Activated CD4-positive, alpha-beta T cell treated with anti-CD3 and anti-CD28 coated beads for 36 hours (primary cell): ENCODE measurements at regions of chr2 and their contacts with region 1.

Region 1: DNA sequence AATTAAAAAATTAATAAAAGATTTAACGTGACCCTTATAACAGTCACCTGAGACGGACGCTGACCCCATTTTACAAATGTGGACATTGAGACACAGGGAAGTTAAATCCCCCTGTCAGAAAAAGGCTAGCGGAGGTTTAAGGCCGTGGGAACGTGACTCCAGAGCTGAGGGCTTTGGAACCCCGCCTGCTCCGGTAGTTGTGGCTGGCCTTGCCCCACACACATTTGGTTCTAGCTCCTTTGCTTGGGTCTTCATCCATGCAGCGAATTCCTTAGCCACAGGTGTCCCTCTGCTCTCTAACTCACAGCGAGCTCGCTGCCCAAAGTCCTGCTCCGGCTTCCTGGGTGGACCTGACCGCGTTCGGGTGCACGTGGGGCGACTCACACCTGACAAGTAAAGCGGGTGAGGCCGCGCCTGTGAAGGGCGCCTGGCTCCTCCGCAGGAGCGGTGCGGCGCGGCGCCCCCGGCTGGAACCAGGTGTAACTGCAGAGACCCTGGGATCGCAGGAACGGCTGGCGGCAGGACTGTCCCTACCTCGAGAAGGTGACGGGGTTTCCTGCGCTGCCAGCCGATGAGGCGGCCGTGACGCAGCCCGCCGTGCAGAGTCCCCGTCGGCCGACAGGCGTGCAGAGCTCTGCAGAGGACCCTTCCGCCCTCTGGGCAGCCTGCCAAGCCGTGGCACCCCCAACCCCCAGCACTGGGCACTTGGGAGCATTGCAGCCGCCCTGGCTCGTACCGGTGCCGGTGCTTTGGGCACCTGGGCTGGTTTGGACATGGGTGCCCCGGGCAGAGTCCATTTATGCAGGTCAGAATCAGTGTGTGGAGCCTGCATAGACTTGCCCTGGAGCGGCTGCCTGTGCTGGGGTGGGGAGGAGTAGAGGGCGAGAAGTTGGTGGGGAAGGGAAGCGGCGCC is 2.4 kb upstream of the PROC start:
- DNase-seq: peak; percentile 93
- ATAC-seq: peak; percentile 95
- H3K4me3 Mint-ChIP-seq: peak overlapping the region; percentile 62
- H3K27ac Mint-ChIP-seq: peak overlapping the region; percentile 56
- H3K4me1 Mint-ChIP-seq: peaks cover 31% of the 10 kb centered on the region
- H3K27me3 Mint-ChIP-seq: peaks cover 19% of the 10 kb centered on the region

Region 2: GRCh38 chr2:126664234-126664633 is 751.6 kb before region 1 on chr2:
- CTCF ChIA-PET with region 1: no interaction called
- POLR2A ChIA-PET with region 1: no interaction called
- intact Hi-C with region 1: loop called in 1 of 2 experiments (anchors 10 kb)
- DNase-seq: peak; percentile 45
- ATAC-seq: peak; percentile 49
- H3K4me3 Mint-ChIP-seq: peak overlapping the region; percentile 49
- H3K27ac Mint-ChIP-seq: peak overlapping the region; percentile 91
- H3K4me1 Mint-ChIP-seq: peaks cover 92% of the 10 kb centered on the region
- H3K27me3 Mint-ChIP-seq: no peaks in the 10 kb centered on the region

Region 3: GRCh38 chr2:127049927-127050802 is 365.7 kb before region 1 on chr2:
- CTCF ChIA-PET with region 1: no interaction called
- POLR2A ChIA-PET with region 1: no interaction called
- intact Hi-C with region 1: no loop called
- DNase-seq: peak; percentile 80
- ATAC-seq: peak; percentile 81
- H3K4me3 Mint-ChIP-seq: no peak overlapping the region
- H3K27ac Mint-ChIP-seq: peak overlapping the region; percentile 31
- H3K4me1 Mint-ChIP-seq: peaks cover 2% of the 10 kb centered on the region
- H3K27me3 Mint-ChIP-seq: no peaks in the 10 kb centered on the region

Region 4: GRCh38 chr2:127197475-127198385 is 218.1 kb before region 1 on chr2:
- CTCF ChIA-PET with region 1: interaction called, 5 read pairs
- POLR2A ChIA-PET with region 1: no interaction called
- intact Hi-C with region 1: loop called in 1 of 2 experiments (anchors 5 kb)
- DNase-seq: peak; percentile 79
- ATAC-seq: peak; percentile 95
- H3K4me3 Mint-ChIP-seq: peak overlapping the region; percentile 58
- H3K27ac Mint-ChIP-seq: no peak overlapping the region
- H3K4me1 Mint-ChIP-seq: no peaks in the 10 kb centered on the region
- H3K27me3 Mint-ChIP-seq: no peaks in the 10 kb centered on the region

Region 5: GRCh38 chr2:127293748-127294562 is 121.9 kb before region 1 on chr2 and contains the start of gene ERCC3:
- CTCF ChIA-PET with region 1: interaction called, 3 read pairs
- POLR2A ChIA-PET with region 1: interaction called, 3 read pairs
- intact Hi-C with region 1: loop called in 1 of 2 experiments (anchors 1 kb)
- DNase-seq: peak; percentile 90
- ATAC-seq: peak; percentile 98
- H3K4me3 Mint-ChIP-seq: peak within 1 kb of the TSS; percentile 98
- H3K27ac Mint-ChIP-seq: peak within 1 kb of the TSS; percentile 100
- H3K4me1 Mint-ChIP-seq: peaks cover 20% of the 10 kb centered on the region
- H3K27me3 Mint-ChIP-seq: no peaks in the 10 kb centered on the region
- total RNA-seq, gene ERCC3: 49.5 to 49.8 TPM

Region 6: GRCh38 chr2:127355386-127356008 is 60.4 kb before region 1 on chr2:
- CTCF ChIA-PET with region 1: interaction called, 5 read pairs
- POLR2A ChIA-PET with region 1: no interaction called
- intact Hi-C with region 1: loop called (anchors 1 to 2 kb)
- DNase-seq: peak; percentile 45
- ATAC-seq: peak; percentile 65
- H3K4me3 Mint-ChIP-seq: no peak overlapping the region
- H3K27ac Mint-ChIP-seq: no peak overlapping the region
- H3K4me1 Mint-ChIP-seq: peaks cover 53% of the 10 kb centered on the region
- H3K27me3 Mint-ChIP-seq: no peaks in the 10 kb centered on the region

Region 7: GRCh38 chr2:127790694-127791529 is 375.1 kb after region 1 on chr2:
- CTCF ChIA-PET with region 1: no interaction called
- POLR2A ChIA-PET with region 1: no interaction called
- intact Hi-C with region 1: no loop called
- DNase-seq: peak; percentile 46
- ATAC-seq: peak; percentile 42
- H3K4me3 Mint-ChIP-seq: no peak overlapping the region
- H3K27ac Mint-ChIP-seq: peak overlapping the region; percentile 60
- H3K4me1 Mint-ChIP-seq: peaks cover 29% of the 10 kb centered on the region
- H3K27me3 Mint-ChIP-seq: no peaks in the 10 kb centered on the region

Region 8: GRCh38 chr2:128282976-128283810 is 867.3 kb after region 1 on chr2:
- CTCF ChIA-PET with region 1: no interaction called
- POLR2A ChIA-PET with region 1: no interaction called
- intact Hi-C with region 1: no loop called
- DNase-seq: no peak
- ATAC-seq: no peak
- H3K4me3 Mint-ChIP-seq: no peak overlapping the region
- H3K27ac Mint-ChIP-seq: no peak overlapping the region
- H3K4me1 Mint-ChIP-seq: peaks cover 6% of the 10 kb centered on the region
- H3K27me3 Mint-ChIP-seq: no peaks in the 10 kb centered on the region